ENCODE measurements at regions of chr5 and their contacts with region 1.

Region 1: GRCh38 chr5:88934439-88934838 is 51.5 kb upstream of the MEF2C start:
- DNase-seq: no peak
- ATAC-seq: no peak
- H3K4me3 Mint-ChIP-seq: no peak overlapping the region
- H3K27ac Mint-ChIP-seq: no peak overlapping the region
- H3K4me1 Mint-ChIP-seq: peaks cover 11% of the 10 kb centered on the region
- H3K27me3 Mint-ChIP-seq: no peaks in the 10 kb centered on the region
- CTCF ChIP-seq: no peak

Region 2: DNA sequence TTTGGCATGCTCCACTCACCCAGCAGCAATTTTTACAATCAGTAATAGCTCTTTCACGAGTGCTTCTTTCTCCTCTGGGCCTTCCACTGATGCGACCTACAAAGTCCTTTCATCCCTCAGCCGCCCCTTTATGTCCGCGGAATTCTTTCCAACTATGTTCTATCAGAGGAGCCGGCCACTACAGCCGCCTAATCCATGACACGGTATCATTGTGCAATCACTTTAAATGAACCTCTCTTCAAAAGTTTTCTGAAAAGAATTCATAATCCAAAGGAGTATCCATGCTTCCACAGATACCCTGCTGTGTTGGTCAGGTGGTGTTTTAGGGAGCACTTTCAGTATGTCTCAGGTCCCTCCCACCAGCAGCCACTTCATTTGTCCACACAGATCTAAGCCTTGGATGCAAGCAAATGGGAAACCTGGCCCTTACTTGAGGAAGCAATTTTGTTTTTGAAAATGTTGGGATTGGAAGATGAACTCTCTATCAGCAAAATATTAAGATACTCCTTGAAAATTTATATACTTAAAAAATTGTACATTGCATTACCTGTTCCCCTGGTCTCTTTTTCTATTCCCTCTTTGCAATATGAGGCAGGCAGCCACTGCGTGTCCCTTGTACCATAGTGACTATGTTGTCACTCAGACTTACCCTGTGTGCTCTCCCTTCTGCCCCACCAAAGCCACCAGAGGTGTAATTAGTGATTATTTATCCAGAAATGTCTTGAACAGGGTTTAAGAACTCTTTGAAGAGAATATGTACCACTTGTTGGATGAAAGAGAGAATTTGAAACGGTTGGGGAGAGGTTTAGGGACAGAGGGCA is 38.5 kb before region 1 on chr5:
- CTCF ChIA-PET with region 1: no interaction called
- POLR2A ChIA-PET with region 1: no interaction called
- intact Hi-C with region 1: loop called (anchors 5 kb)
- DNase-seq: no peak
- ATAC-seq: no peak
- H3K4me3 Mint-ChIP-seq: no peak overlapping the region
- H3K27ac Mint-ChIP-seq: peak overlapping the region; percentile 3
- H3K4me1 Mint-ChIP-seq: peaks cover 25% of the 10 kb centered on the region
- H3K27me3 Mint-ChIP-seq: no peaks in the 10 kb centered on the region
- CTCF ChIP-seq: no peak

Region 3: DNA sequence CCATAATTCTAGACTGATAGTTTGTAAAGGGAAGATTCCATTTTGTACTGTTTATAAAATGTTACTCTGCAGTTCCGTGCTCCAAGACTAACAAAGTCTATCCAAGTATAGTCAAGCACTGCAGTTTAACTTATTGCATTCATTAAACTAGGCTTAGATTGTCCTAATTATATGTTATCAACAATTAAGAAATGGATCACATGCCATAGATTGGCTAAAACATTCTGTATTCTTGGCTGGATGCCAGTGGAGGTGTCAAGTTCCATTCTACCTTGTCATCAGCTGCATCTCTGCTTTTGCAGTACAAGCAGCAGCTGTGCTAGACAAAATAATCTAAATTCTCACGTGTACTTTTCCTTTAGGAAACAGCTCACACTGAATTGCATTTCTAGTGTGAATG is 17.9 kb after region 1 on chr5:
- CTCF ChIA-PET with region 1: no interaction called
- POLR2A ChIA-PET with region 1: no interaction called
- intact Hi-C with region 1: loop called (anchors 2 kb)
- DNase-seq: no peak
- ATAC-seq: no peak
- H3K4me3 Mint-ChIP-seq: no peak overlapping the region
- H3K27ac Mint-ChIP-seq: no peak overlapping the region
- H3K4me1 Mint-ChIP-seq: peaks cover 21% of the 10 kb centered on the region
- H3K27me3 Mint-ChIP-seq: no peaks in the 10 kb centered on the region
- CTCF ChIP-seq: no peak